ENCODE measurements at regions of chr1 and their contacts with region 1.

Region 1: GRCh38 chr1:153633716-153634665 is at the start of gene CHTOP:
- DNase-seq: peak; percentile 98
- ATAC-seq: peak; percentile 86
- H3K4me3 Mint-ChIP-seq: peak within 1 kb of the TSS; percentile 99
- H3K27ac Mint-ChIP-seq: peak within 1 kb of the TSS; percentile 100
- H3K4me1 Mint-ChIP-seq: peaks cover 44% of the 10 kb centered on the region
- H3K27me3 Mint-ChIP-seq: no peaks in the 10 kb centered on the region
- CTCF ChIP-seq: no peak
- total RNA-seq, gene CHTOP: 140 and 148 TPM in 2 replicates

Region 2: DNA sequence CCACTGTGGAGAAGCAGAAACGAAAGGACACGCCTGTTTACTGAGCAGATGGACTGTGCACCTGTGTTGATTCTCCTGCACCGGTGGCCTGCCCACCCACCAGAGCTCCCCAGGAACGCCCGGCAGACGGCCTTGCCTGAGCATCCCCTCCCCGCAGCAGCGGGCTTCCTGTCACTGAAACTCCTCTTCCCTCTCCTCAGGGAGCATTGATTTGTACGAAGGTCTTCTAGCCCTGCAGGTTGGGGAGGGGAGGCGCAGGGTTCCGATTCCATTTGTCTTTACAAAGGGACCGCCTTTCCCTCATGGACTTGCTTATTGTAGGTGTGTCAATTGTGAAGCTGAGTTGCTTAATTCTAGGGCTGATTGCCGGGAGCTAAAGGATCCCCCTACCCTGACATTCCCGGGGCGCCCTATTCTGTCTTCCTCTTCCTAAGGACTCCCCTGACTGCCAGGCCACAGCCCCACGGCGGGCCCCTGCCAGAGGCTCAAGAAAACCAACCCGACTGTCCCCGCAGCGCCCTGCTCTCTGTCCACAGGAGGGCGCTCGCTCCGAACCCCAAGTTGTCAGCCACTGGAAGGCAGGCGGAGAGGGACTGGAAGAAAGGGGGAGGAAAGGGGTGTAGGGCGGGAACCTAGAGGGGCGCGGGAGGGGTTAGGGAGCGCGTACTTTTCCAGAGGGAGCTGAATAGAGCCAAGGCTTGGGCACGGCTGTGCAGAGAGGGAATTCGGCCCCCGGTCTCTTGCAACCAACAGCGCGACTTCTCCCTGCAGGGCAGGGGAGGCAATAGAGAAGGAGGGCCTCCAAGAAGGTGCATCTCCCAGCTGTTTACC is 101.0 kb before region 1 on chr1:
- CTCF ChIA-PET with region 1: interaction called, 6 read pairs
- POLR2A ChIA-PET with region 1: interaction called, 27 read pairs
- intact Hi-C with region 1: loop called (anchors 2 kb)
- DNase-seq: peak; percentile 60
- ATAC-seq: peak; percentile 26
- H3K4me3 Mint-ChIP-seq: peak overlapping the region; percentile 48
- H3K27ac Mint-ChIP-seq: peak overlapping the region; percentile 13
- H3K4me1 Mint-ChIP-seq: peaks cover 45% of the 10 kb centered on the region
- H3K27me3 Mint-ChIP-seq: no peaks in the 10 kb centered on the region
- CTCF ChIP-seq: no peak

Region 3: GRCh38 chr1:153572569-153573015 is 61.4 kb before region 1 on chr1:
- CTCF ChIA-PET with region 1: interaction called, 38 read pairs
- POLR2A ChIA-PET with region 1: interaction called, 65 read pairs
- intact Hi-C with region 1: loop called (anchors 1 kb)
- DNase-seq: peak; percentile 53
- ATAC-seq: peak; percentile 93
- H3K4me3 Mint-ChIP-seq: no peak overlapping the region
- H3K27ac Mint-ChIP-seq: peak overlapping the region; percentile 79
- H3K4me1 Mint-ChIP-seq: peaks cover 27% of the 10 kb centered on the region
- H3K27me3 Mint-ChIP-seq: peaks cover 8% of the 10 kb centered on the region
- CTCF ChIP-seq: no peak

Region 4: GRCh38 chr1:153617675-153618074 is 16.3 kb before region 1 on chr1:
- CTCF ChIA-PET with region 1: interaction called, 3 read pairs
- POLR2A ChIA-PET with region 1: interaction called, 10 read pairs
- intact Hi-C with region 1: no loop called
- DNase-seq: no peak
- ATAC-seq: no peak
- H3K4me3 Mint-ChIP-seq: no peak overlapping the region
- H3K27ac Mint-ChIP-seq: no peak overlapping the region
- H3K4me1 Mint-ChIP-seq: peaks cover 1% of the 10 kb centered on the region
- H3K27me3 Mint-ChIP-seq: no peaks in the 10 kb centered on the region
- CTCF ChIP-seq: no peak

Region 5: GRCh38 chr1:153658400-153659174 is 24.6 kb after region 1 on chr1 and contains the start of gene SNAPIN:
- CTCF ChIA-PET with region 1: no interaction called
- POLR2A ChIA-PET with region 1: interaction called, 37 read pairs
- intact Hi-C with region 1: loop called (anchors 1 kb)
- DNase-seq: peak; percentile 94
- ATAC-seq: peak; percentile 99
- H3K4me3 Mint-ChIP-seq: peak within 1 kb of the TSS; percentile 96
- H3K27ac Mint-ChIP-seq: peak within 1 kb of the TSS; percentile 91
- H3K4me1 Mint-ChIP-seq: peaks cover 14% of the 10 kb centered on the region
- H3K27me3 Mint-ChIP-seq: no peaks in the 10 kb centered on the region
- CTCF ChIP-seq: no peak
- total RNA-seq, gene SNAPIN: 50.4 and 51.5 TPM in 2 replicates

Region 6: GRCh38 chr1:153783233-153784190 is 149.5 kb after region 1 on chr1:
- CTCF ChIA-PET with region 1: no interaction called
- POLR2A ChIA-PET with region 1: interaction called, 12 read pairs
- intact Hi-C with region 1: no loop called
- DNase-seq: peak; percentile 92
- ATAC-seq: peak; percentile 96
- H3K4me3 Mint-ChIP-seq: peak overlapping the region; percentile 93
- H3K27ac Mint-ChIP-seq: peak overlapping the region; percentile 96
- H3K4me1 Mint-ChIP-seq: peaks cover 25% of the 10 kb centered on the region
- H3K27me3 Mint-ChIP-seq: no peaks in the 10 kb centered on the region
- CTCF ChIP-seq: no peak